ENCODE measurements at regions of chr6 and their contacts with region 1.

Region 1: GRCh38 chr6:89610149-89610642 is 28.4 kb downstream of the LYRM2 start:
- DNase-seq: peak; percentile 79
- H3K4me3 ChIP-seq: no peak overlapping the region
- H3K27ac ChIP-seq: no peak overlapping the region
- H3K4me1 ChIP-seq: no peaks in the 10 kb centered on the region
- H3K27me3 ChIP-seq: no peaks in the 10 kb centered on the region
- CTCF ChIP-seq: peak; percentile 58 to 86 (median 64)
- EP300 ChIP-seq: no peak
- POLR2A ChIP-seq: no peak

Region 2: GRCh38 chr6:89432875-89433251 is 177.3 kb before region 1 on chr6 and contains the start of gene ANKRD6:
- intact Hi-C with region 1: loop called (anchors 1 kb)
- DNase-seq: peak; percentile 83
- H3K4me3 ChIP-seq: peak within 1 kb of the TSS; percentile 90 to 99 (median 92)
- H3K27ac ChIP-seq: peak within 1 kb of the TSS in 2 of 4 donors; percentile 49 to 62
- H3K4me1 ChIP-seq: peaks cover 0 to 27% (median 10%) of the 10 kb centered on the region in 4 donors
- H3K27me3 ChIP-seq: no peaks in the 10 kb centered on the region
- CTCF ChIP-seq: peak; percentile 44 to 85 (median 64)
- EP300 ChIP-seq: no peak
- POLR2A ChIP-seq: no peak
- total RNA-seq, gene ANKRD6: 8.0 to 21.6 (median 17.3) TPM

Region 3: DNA sequence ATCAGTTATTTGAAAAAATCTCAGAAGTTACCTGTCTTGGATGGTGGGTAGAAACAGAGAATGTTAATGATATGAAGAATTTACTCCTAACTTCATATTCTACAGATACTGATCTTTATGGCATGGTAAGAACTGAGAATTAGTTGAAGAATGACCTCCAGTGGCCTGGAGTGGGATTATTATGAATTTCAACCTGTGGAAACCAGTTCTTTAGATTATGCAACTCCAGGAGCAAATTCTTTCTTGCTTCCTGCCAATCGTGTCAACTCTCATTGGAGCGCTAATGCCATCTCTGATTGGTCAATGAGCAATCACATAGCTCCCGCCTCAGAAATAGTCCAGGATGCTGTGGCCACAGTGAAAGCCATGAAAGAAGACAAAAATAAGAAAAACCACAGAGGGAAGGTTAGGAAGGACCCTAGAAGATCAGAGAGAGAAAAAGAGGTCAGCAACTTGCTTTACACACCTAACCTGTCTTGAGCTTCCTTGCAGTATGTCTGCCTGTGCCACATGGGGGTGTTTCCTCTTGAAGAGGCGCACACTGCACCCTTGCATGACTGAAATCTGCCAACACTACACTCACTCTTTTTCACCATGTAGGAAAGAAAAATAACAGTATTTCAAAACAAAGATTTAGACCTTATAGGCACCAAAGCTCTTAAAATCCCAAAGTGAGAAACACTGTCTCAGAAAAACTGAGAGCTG is 12.1 kb before region 1 on chr6:
- intact Hi-C with region 1: no loop called
- DNase-seq: no peak
- H3K4me3 ChIP-seq: no peak overlapping the region
- H3K27ac ChIP-seq: no peak overlapping the region
- H3K4me1 ChIP-seq: peaks cover 0 to 9% (median 0%) of the 10 kb centered on the region in 4 donors
- H3K27me3 ChIP-seq: no peaks in the 10 kb centered on the region
- CTCF ChIP-seq: no peak
- EP300 ChIP-seq: no peak
- POLR2A ChIP-seq: no peak

Measured in sigmoid colon (tissue), 7 donors.